HEK293 (cell line): ENCODE measurements at regions of chr13 and their contacts with region 1.

Region 1: GRCh38 chr13:52665325-52665724 is 12.7 kb downstream of the SUGT1 start:
- H3K4me3 ChIP-seq: no peak overlapping the region
- H3K27ac ChIP-seq: no peak overlapping the region
- H3K4me1 ChIP-seq: no peaks in the 10 kb centered on the region
- CTCF ChIP-seq: no peak

Region 2: DNA sequence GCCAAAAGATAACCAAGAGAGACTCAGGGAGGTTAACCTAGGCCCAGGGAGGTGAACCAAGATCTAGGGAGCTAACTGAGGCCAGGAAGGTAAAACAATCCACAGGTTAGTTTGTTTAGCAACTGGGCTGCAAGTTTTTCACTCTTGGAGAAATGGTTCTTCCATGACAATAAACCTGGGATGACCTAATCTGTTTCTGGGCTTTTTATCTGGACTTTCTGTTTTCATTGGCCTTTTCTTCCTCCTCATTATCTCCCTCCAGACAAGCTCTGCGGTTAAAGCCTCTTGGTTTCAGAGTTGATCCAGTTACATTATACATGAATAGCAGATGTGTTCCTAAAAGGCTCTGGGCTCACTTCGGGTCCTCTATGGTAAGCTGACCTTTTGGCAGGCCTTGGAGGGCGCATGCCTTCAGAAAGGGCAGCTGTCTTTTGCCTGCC is 138.9 kb after region 1 on chr13:
- CTCF ChIA-PET with region 1: interaction called, 26 read pairs
- POLR2A ChIA-PET with region 1: no interaction called
- H3K4me3 ChIP-seq: no peak overlapping the region
- H3K27ac ChIP-seq: peak overlapping the region; percentile 67
- H3K4me1 ChIP-seq: peaks cover 10% of the 10 kb centered on the region
- CTCF ChIP-seq: no peak

Region 3: DNA sequence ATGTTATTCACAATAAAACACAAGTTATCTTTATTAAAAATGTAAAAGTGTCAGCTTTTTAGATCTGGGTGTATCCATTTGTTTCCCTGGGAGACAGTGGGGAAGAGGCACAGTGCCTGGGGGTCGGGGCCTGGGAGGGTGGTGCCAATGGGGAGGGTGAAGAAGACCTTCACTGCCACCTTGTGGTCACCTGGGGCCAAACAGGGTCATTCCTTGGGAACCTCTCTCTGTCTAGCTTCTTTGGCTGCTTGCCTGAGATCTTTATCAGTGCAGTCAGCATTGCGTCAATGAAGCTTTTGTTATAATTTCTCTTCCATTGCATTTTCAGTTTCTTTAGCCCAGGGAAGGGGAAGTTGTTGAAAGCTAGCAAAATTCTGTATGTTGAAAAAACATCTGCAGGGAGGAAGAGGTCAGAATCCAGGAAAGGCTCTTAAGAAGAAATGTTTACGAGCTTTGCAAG is 144.0 kb after region 1 on chr13:
- CTCF ChIA-PET with region 1: interaction called, 26 read pairs
- POLR2A ChIA-PET with region 1: no interaction called
- H3K4me3 ChIP-seq: no peak overlapping the region
- H3K27ac ChIP-seq: no peak overlapping the region
- H3K4me1 ChIP-seq: peaks cover 9% of the 10 kb centered on the region
- CTCF ChIP-seq: peak; percentile 26; the same call in 1 of the 2 replicates

Region 4: GRCh38 chr13:53159430-53159829 is 494.1 kb after region 1 on chr13:
- CTCF ChIA-PET with region 1: no interaction called
- POLR2A ChIA-PET with region 1: no interaction called
- H3K4me3 ChIP-seq: no peak overlapping the region
- H3K27ac ChIP-seq: no peak overlapping the region
- H3K4me1 ChIP-seq: no peaks in the 10 kb centered on the region
- CTCF ChIP-seq: no peak